ENCODE measurements at regions of chr5 and their contacts with region 1.

Region 1: GRCh38 chr5:14706615-14707021 is 42.1 kb downstream of the OTULIN start:
- DNase-seq: peak in 8 of 9 donors; percentile 33 to 88 (median 84)
- ATAC-seq: peak; percentile 96
- H3K4me3 ChIP-seq: peak overlapping the region; percentile 4
- H3K4me3 Mint-ChIP-seq: peak overlapping the region; percentile 74 to 94 (median 86)
- H3K27ac ChIP-seq: peak overlapping the region; percentile 72
- H3K27ac Mint-ChIP-seq: peak overlapping the region; percentile 96 to 100 (median 99)
- H3K4me1 ChIP-seq: peaks cover 34 to 75% of the 10 kb centered on the region in 2 donors
- H3K4me1 Mint-ChIP-seq: peaks cover 50 to 96% (median 86%) of the 10 kb centered on the region in 7 donors
- H3K27me3 ChIP-seq: no peaks in the 10 kb centered on the region
- H3K27me3 Mint-ChIP-seq: no peaks in the 10 kb centered on the region

Region 2: GRCh38 chr5:14720236-14720971 is 13.8 kb after region 1 on chr5:
- CTCF ChIA-PET with region 1: interaction called, 20 read pairs
- POLR2A ChIA-PET with region 1: interaction called, 60 read pairs
- intact Hi-C with region 1: loop called in 1 of 2 experiments (anchors 1 kb)
- DNase-seq: no peak
- ATAC-seq: no peak
- H3K4me3 ChIP-seq: no peak overlapping the region
- H3K4me3 Mint-ChIP-seq: peak overlapping the region in 3 of 10 donors; percentile 8 to 27 (median 16)
- H3K27ac ChIP-seq: no peak overlapping the region
- H3K27ac Mint-ChIP-seq: peak overlapping the region in 8 of 9 donors; percentile 33 to 85 (median 76)
- H3K4me1 ChIP-seq: peaks cover 0 to 14% of the 10 kb centered on the region in 2 donors
- H3K4me1 Mint-ChIP-seq: peaks cover 17 to 53% (median 50%) of the 10 kb centered on the region in 7 donors
- H3K27me3 ChIP-seq: no peaks in the 10 kb centered on the region
- H3K27me3 Mint-ChIP-seq: no peaks in the 10 kb centered on the region

Region 3: GRCh38 chr5:15215056-15215455 is 508.4 kb after region 1 on chr5:
- CTCF ChIA-PET with region 1: no interaction called
- POLR2A ChIA-PET with region 1: no interaction called
- intact Hi-C with region 1: no loop called
- DNase-seq: no peak
- ATAC-seq: no peak
- H3K4me3 ChIP-seq: no peak overlapping the region
- H3K4me3 Mint-ChIP-seq: no peak overlapping the region
- H3K27ac ChIP-seq: no peak overlapping the region
- H3K27ac Mint-ChIP-seq: no peak overlapping the region
- H3K4me1 ChIP-seq: no peaks in the 10 kb centered on the region
- H3K4me1 Mint-ChIP-seq: no peaks in the 10 kb centered on the region
- H3K27me3 ChIP-seq: no peaks in the 10 kb centered on the region
- H3K27me3 Mint-ChIP-seq: no peaks in the 10 kb centered on the region